Posterior cingulate gyrus (tissue), 11 donors: ENCODE measurements at regions of chr10 and their contacts with region 1.

Region 1: GRCh38 chr10:35336084-35336831 is at the start of gene CCNY:
- DNase-seq: peak; percentile 64 to 95 (median 76)

Region 2: DNA sequence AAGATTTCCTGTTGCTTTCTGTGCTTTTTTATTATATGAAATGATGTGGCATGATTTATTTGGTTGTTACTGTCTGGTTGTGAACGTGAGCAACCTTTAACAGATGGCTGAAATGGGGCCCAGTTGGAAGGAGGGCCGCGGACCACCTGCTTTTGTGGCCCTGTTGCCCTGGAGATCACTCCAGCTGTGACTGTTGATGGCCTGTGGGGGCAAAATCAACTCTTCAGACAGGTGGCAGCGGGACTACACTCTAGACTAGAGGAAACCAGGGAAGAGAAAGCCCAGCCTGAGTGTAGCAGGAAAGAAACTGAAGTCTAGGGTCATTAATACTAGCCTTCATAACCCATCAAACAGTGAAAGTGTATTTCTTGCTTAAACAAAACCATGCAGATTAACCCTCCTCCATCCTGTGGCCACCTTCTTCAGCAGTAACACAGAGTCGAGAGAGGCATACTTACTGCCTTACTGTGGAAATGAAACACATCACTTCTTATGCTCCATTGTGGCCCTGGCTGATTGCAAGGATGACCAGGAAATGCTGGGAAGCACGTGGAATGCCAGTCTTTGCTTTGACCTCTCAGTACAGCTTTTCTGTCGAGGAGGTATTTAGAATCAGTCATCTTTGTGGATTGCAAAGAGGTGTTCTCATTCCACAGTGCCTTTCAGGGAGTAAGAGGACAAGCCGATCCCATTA is 80.5 kb after region 1 on chr10:
- intact Hi-C with region 1: loop called (anchors 5 kb)
- DNase-seq: no peak

Region 3: GRCh38 chr10:35451151-35452016 is 115.1 kb after region 1 on chr10:
- intact Hi-C with region 1: loop called (anchors 5 kb)
- DNase-seq: peak in 1 of 10 donors; percentile 73

Region 4: DNA sequence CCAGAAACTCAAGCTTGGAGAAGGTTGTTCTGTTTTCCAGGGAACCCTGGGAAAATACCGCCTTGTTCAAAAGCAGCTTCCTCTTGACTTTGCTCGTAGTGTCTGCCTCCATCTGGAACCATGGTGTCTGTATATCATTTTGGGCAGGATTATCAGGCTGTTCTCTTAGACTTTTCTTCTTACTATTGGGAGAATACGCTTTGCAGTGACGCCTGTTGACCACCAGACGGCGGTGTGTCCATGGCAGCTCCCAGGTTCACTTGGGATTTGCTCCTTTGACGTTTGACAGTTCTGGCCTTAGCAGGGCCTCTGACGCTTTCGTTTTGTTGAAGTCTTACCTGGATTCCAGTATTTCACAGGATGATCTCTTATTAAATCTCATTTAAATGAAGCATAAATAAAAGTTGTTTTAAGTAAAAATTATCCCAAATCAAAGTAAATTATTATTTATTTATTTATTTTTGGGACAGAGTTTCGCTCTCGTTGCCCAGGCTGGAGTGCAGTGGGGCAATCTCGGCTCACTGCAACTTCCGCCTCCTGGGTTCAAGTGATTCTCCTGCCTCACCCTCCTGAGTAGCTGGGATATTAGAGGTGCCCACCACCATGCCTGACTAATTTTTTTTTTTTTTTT is 227.1 kb after region 1 on chr10:
- intact Hi-C with region 1: loop called (anchors 5 kb)
- DNase-seq: peak in 7 of 10 donors; percentile 42 to 91 (median 54)